OCI-LY7 (cell line): ENCODE measurements at regions of chr13 and their contacts with region 1.

Region 1: DNA sequence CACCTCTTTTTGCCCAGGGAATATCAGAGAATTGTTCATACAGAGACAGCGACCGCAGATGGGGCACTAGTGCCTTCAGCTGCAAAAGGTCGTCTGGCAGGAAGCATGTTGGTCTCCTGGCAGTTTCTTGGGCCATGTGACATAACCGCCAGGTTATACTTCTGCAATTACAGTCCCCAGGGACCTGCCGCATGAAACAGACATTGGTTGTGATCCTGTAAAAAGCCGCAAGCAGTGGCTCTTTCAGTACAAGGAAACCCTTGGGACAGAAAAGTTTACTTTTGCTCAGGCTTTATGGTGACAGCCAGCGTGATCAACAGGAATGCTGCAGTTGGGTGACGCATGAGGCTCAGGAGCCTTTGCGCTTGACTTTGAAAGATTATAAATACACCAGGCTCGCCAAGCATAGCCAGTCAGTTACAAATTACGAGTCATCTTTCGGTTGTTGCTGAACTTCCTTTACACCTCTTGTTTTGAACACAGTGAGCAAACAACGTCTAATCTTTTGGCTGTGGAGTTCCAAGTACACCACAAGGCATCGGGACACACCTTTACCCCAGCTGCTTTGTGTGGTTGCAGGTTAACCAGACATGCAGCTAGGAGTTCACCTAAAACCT is 50.5 kb upstream of the UBE2L5 start:
- DNase-seq: peak; percentile 100
- H3K4me3 ChIP-seq: peak overlapping the region; percentile 80
- H3K27ac ChIP-seq: peak overlapping the region; percentile 97
- H3K4me1 ChIP-seq: peaks cover 65% of the 10 kb centered on the region
- CTCF ChIP-seq: peak; percentile 57

Region 2: GRCh38 chr13:30294004-30294403 is 77.8 kb before region 1 on chr13:
- CTCF ChIA-PET with region 1: no interaction called
- POLR2A ChIA-PET with region 1: no interaction called
- intact Hi-C with region 1: no loop called
- DNase-seq: no peak
- H3K4me3 ChIP-seq: no peak overlapping the region
- H3K27ac ChIP-seq: no peak overlapping the region
- H3K4me1 ChIP-seq: peaks cover 45% of the 10 kb centered on the region
- CTCF ChIP-seq: no peak

Region 3: GRCh38 chr13:30306762-30307193 is 65.0 kb before region 1 on chr13:
- CTCF ChIA-PET with region 1: no interaction called
- POLR2A ChIA-PET with region 1: interaction called, 7 read pairs
- intact Hi-C with region 1: loop called (anchors 1 kb)
- DNase-seq: peak; percentile 98
- H3K4me3 ChIP-seq: peak overlapping the region; percentile 82
- H3K27ac ChIP-seq: peak overlapping the region; percentile 70
- H3K4me1 ChIP-seq: peaks cover 72% of the 10 kb centered on the region
- CTCF ChIP-seq: no peak

Region 4: DNA sequence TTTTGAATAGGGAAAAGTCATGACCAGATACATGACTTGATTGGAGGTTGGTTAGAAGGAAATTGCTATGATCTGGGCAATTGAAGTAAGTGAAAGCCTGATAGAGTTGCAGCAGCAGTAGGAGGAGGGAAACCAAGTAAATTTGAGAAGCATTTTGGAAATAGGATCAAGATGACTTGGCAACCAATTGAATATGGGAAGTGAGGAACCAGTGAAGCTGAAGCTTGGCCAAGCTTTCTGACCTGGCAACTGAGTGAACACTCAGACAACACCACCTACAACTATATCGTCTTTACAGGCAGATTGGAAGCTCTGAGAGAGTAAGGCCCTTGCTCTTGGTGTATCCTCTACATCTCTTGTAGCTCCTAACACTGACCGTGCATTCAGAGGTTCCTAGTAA is 48.2 kb before region 1 on chr13:
- CTCF ChIA-PET with region 1: no interaction called
- POLR2A ChIA-PET with region 1: no interaction called
- intact Hi-C with region 1: no loop called
- DNase-seq: no peak
- H3K4me3 ChIP-seq: no peak overlapping the region
- H3K27ac ChIP-seq: no peak overlapping the region
- H3K4me1 ChIP-seq: peaks cover 53% of the 10 kb centered on the region
- CTCF ChIP-seq: no peak

Region 5: DNA sequence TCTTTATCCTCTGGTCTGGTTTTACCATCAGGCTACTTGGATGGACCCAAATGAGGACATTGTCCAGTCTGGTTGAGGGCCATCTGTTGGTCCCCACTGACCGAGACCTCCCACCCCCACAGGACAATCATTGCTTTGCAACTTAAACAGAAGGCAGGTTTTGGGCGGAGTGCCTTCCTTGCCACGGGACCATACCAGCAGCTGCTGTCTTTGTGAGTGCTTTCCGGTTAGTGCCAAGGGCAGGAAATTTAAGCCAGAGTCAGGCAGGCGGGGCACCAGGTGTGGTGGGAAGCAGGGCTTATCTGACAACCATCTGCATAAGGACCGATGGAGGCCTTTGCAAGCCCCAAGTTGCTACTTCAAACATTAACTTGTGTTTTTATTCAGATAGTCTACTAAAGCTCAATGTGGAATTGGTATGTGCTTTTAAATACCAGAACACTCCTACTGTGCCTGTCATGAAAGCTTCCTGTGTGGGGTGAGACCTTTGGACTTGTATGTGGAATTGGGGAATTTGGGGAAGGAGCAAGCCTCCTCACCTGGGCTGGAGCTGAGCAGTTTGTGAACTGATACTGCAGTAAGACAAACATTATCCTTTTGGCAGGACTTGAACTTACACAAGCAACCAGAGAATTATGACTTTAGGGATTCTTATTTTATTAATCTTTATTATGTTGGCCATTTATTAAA is 11.2 kb after region 1 on chr13:
- CTCF ChIA-PET with region 1: no interaction called
- POLR2A ChIA-PET with region 1: interaction called, 64 read pairs
- intact Hi-C with region 1: no loop called
- DNase-seq: peak; percentile 77
- H3K4me3 ChIP-seq: no peak overlapping the region
- H3K27ac ChIP-seq: peak overlapping the region; percentile 53
- H3K4me1 ChIP-seq: peaks cover 42% of the 10 kb centered on the region
- CTCF ChIP-seq: 0 out of 2 replicates have a peak, but pooled peaks have one; percentile 6

Region 6: DNA sequence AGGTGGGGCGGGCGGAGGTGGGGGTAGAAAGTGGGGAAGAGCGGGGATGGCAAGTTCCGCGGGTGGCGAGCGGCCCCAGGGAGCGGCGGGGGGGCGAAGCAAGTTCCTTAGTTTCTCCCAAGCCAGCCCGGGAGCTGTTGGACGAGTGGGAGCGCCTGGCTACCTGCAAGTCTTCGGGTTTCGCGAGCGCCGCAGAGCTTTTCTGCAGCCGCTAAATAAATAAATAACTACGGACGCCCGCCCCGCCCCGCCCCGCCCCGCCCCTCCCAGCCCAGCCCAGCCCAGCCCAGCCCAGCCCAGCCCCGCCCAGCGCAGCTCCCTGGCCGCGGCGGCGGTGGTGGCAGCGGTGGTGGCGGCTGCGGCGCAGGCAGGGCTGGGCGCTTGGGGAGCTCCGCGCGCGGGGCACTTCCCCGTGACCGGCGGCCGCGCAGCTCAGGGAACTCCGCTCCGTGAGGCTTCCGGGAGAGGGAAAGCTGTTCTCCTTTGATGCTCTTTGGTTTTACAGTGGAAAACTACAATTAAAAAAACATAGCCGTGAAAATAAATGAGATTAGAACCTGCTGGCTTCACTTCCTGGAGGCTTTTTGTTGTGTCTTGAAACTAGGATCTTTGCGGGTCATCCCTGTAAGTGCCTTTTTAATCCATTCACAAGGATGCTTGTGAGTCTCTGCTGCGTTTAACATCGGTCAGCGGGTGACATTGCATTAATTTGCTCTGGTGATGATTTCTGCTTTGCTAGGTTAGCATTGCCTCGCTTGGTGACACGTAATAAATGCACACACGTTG is 50.5 kb after region 1 on chr13 and contains the start of gene UBE2L5:
- CTCF ChIA-PET with region 1: interaction called, 5 read pairs
- POLR2A ChIA-PET with region 1: interaction called, 99 read pairs
- intact Hi-C with region 1: loop called (anchors 2 kb)
- DNase-seq: peak; percentile 88
- H3K4me3 ChIP-seq: peak within 1 kb of the TSS; percentile 72
- H3K27ac ChIP-seq: peak within 1 kb of the TSS; percentile 76
- H3K4me1 ChIP-seq: peaks cover 77% of the 10 kb centered on the region
- CTCF ChIP-seq: no peak
- total RNA-seq, gene UBE2L5: 0.15 and 0.22 TPM in 2 replicates

Region 7: DNA sequence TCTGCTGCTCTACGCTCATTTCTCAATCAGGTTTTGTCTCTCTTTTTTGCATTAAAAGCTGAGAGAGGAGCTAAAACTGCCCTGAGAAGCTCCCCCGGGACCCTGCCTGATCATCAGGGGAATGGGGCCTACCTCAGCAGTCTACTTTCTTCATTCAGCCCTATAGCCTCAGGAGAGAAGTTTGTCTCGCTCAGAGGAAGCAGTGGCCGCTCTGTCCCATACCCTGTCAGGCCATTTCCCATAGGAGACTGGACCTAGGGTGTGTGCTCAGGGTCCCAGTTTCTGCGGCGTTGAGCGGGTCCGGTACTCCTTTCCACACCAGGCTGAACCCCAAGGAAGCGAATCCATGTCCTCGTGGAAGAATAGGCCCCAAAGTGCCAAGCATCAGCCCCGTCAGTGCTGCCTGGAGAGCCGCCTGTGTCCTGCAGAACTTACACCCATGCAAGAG is 72.2 kb after region 1 on chr13:
- CTCF ChIA-PET with region 1: interaction called, 17 read pairs
- POLR2A ChIA-PET with region 1: interaction called, 214 read pairs
- intact Hi-C with region 1: loop called (anchors 1 kb)
- DNase-seq: peak; percentile 97
- H3K4me3 ChIP-seq: peak overlapping the region; percentile 87
- H3K27ac ChIP-seq: peak overlapping the region; percentile 98
- H3K4me1 ChIP-seq: peaks cover 72% of the 10 kb centered on the region
- CTCF ChIP-seq: no peak; the same call in 1 of the 2 replicates

Region 8: DNA sequence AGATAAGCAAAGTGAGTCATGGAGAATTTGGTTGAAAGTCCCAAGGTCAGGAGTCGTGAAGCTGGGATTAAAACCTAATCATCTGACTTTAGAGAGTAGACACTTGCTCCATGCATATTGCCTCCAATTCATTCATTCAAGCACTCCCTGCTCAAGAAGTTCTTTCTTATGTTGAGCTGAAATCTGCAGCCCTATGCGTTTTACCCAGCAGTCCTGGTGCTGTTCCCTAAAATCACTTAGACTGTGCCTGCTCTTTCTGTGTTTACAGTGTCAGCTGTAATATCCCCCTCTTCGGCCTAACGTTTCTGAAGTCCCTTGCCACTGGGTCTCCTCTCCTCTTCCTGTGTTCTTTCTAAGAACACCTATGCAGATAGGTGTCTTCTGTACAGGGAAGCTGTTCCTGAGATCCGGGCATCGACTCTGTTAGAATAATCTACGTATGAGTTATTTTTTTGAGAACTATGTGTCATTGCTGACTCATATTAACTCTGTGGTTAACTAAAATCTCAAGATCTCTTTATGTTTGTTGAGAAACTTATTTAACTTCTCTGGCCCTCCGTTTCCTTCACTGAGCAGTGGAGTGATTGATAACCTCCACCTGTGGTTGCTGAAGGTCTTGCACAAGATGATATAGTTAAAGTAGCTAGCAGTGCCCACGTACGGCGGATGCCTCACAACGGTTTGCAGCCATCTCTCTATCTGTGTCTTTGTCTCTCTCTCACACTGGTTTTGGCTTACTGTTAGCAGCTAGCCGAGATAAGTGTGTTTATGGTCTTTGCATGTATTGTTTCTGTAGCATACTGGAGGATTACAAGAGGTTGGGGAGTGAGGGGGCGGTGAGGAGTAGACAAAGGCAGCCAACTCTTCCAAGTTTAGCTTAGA is 368.2 kb after region 1 on chr13:
- CTCF ChIA-PET with region 1: no interaction called
- POLR2A ChIA-PET with region 1: interaction called, 3 read pairs
- intact Hi-C with region 1: loop called (anchors 5 kb)
- DNase-seq: peak; percentile 5
- H3K4me3 ChIP-seq: no peak overlapping the region
- H3K27ac ChIP-seq: no peak overlapping the region
- H3K4me1 ChIP-seq: peaks cover 57% of the 10 kb centered on the region
- CTCF ChIP-seq: no peak

Region 9: GRCh38 chr13:30787738-30788525 is 416.2 kb after region 1 on chr13:
- CTCF ChIA-PET with region 1: no interaction called
- POLR2A ChIA-PET with region 1: no interaction called
- intact Hi-C with region 1: no loop called
- DNase-seq: no peak
- H3K4me3 ChIP-seq: no peak overlapping the region
- H3K27ac ChIP-seq: no peak overlapping the region
- H3K4me1 ChIP-seq: no peaks in the 10 kb centered on the region
- CTCF ChIP-seq: no peak